ENCODE measurements at regions of chr3 and their contacts with region 1.

Region 1: DNA sequence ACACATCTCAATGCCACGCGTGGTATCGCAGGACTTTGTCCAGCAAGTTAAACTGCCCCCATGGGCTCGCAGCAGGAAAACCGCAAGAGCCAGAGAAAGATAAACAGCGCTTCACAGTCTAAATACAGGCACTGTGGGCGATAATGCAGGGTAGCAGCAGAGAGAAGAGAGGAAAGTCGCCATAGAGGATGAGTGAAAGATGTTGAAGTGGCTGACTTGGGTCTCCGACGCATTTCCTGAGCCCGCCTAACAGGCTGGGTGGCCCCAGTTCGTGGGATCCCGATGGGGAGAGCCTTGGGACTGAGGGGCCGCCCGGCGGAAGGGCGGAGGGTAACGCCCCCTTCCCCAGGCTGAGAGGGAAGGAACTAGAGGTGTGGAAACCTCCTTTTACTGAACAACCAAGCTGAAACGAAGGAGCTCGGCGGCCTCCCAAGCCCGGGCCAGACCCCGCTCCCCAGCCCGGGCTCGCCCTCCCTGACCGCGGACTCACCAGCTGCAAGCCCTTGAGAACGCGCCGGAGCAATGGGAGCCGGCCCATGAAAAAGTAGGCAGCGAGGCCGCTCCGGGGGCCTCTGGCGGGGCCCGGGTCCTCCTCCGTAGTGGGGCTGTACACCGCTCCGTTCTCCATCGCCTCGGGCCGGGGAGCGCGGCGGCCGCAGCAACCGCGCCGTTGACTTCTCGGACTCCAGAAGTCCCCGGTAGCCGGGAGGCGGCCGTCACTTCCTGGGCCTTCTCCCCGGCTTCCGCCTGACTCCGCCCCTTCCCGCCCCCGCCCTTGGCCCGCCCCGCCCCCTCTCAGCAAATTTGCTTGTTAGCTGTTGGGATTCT is at the start of gene CMTM6:
- DNase-seq: peak; percentile 67
- ATAC-seq: peak; percentile 80
- H3K4me3 Mint-ChIP-seq: peak within 1 kb of the TSS; percentile 98
- H3K27ac Mint-ChIP-seq: peak within 1 kb of the TSS; percentile 90
- H3K4me1 Mint-ChIP-seq: peaks cover 41% of the 10 kb centered on the region
- H3K27me3 Mint-ChIP-seq: no peaks in the 10 kb centered on the region
- CTCF ChIP-seq: no peak
- total RNA-seq, gene CMTM6: 84.6 and 90.1 TPM in 2 replicates

Region 2: DNA sequence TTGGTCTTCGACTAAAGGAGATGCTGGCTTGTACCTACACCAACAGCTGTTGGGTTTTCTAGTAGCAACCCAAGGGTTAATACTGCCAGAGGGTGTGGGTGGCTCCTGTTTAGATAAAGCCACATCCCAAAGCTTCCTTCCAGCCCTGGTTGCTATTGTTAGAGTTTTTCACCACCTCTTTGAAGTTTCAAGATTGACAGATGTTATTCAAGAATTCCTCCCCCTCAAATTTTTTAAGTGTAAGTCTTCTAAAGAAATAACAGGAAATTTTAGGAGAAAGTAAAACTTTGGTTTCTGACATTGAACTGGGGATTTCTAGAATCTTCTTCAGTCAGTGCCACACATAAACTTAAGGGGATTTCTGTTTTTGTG is 1835.1 kb before region 1 on chr3:
- CTCF ChIA-PET with region 1: no interaction called
- POLR2A ChIA-PET with region 1: no interaction called
- intact Hi-C with region 1: no loop called
- DNase-seq: no peak
- ATAC-seq: no peak
- H3K4me3 Mint-ChIP-seq: peak overlapping the region; percentile 19
- H3K27ac Mint-ChIP-seq: peak overlapping the region; percentile 82
- H3K4me1 Mint-ChIP-seq: peaks cover 93% of the 10 kb centered on the region
- H3K27me3 Mint-ChIP-seq: no peaks in the 10 kb centered on the region
- CTCF ChIP-seq: no peak

Region 3: GRCh38 chr3:32484436-32484835 is 17.9 kb before region 1 on chr3:
- CTCF ChIA-PET with region 1: no interaction called
- POLR2A ChIA-PET with region 1: interaction called, 38 read pairs
- intact Hi-C with region 1: loop called (anchors 1 kb)
- DNase-seq: no peak
- ATAC-seq: peak; percentile 93
- H3K4me3 Mint-ChIP-seq: peak overlapping the region; percentile 65
- H3K27ac Mint-ChIP-seq: peak overlapping the region; percentile 86
- H3K4me1 Mint-ChIP-seq: peaks cover 57% of the 10 kb centered on the region
- H3K27me3 Mint-ChIP-seq: no peaks in the 10 kb centered on the region
- CTCF ChIP-seq: no peak

Measured in activated B cell treated with CpG ODN at 0.5 μM for 24 hours (primary cell).